ENCODE measurements at regions of chr16 and their contacts with region 1.

Region 1: GRCh38 chr16:89764711-89765201 is 43.4 kb downstream of the ZNF276 start:
- DNase-seq: peak; percentile 26 to 67 (median 35)
- H3K4me3 ChIP-seq: peak overlapping the region; percentile 49 to 56
- H3K4me3 Mint-ChIP-seq: peak overlapping the region; percentile 87 to 95 (median 92)
- H3K27ac ChIP-seq: peak overlapping the region; percentile 75
- H3K27ac Mint-ChIP-seq: peak overlapping the region; percentile 81 to 98 (median 96)
- H3K4me1 ChIP-seq: peaks cover 50% of the 10 kb centered on the region
- H3K4me1 Mint-ChIP-seq: peaks cover 32 to 53% (median 45%) of the 10 kb centered on the region in 4 donors
- H3K27me3 ChIP-seq: no peaks in the 10 kb centered on the region
- H3K27me3 Mint-ChIP-seq: no peaks in the 10 kb centered on the region

Region 2: DNA sequence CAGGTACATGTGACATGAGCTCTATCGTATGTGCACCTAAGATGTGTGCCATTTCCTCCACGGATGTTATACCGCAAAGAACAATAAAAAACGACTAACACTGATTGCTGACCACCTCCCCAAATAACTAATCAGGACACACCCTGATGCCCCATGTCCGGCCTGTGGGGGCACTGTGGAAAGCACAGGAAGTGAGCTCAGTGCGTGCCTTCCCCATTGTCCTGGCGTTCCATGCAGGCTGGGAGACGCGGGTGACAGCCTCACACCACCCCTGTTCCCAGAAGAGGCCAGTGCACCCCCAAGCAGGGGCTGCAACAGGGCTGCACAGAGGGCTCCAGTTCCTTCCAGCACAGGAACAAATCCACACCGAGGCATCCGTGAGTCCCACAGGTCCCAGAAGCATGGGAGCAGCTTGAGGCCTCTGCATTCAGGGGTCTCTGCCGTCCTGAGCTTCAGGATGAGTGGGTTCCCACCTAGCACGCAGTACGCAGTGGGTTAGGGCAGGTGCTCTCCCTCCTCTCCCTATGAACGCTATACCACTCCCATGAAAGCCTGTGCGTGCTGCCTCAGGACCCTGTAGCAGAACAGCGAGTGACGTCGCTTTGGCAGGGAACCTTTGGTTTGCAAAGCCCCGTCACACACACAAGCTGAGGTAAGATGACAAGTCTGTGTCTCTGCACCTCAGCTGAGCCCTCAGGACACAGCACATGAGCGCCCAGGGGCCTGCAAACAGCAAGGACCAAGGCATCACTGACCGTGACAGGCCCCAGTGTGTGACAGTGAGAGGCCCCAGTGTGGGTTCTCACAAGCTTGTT is 429.6 kb before region 1 on chr16:
- CTCF ChIA-PET with region 1: no interaction called
- POLR2A ChIA-PET with region 1: no interaction called
- intact Hi-C with region 1: no loop called
- DNase-seq: peak in 1 of 5 donors; percentile 41
- H3K4me3 ChIP-seq: no peak overlapping the region
- H3K4me3 Mint-ChIP-seq: peak overlapping the region in 2 of 8 donors; percentile 20 to 46
- H3K27ac ChIP-seq: peak overlapping the region; percentile 1
- H3K27ac Mint-ChIP-seq: peak overlapping the region; percentile 36 to 88 (median 55)
- H3K4me1 ChIP-seq: peaks cover 85% of the 10 kb centered on the region
- H3K4me1 Mint-ChIP-seq: peaks cover 43 to 84% (median 68%) of the 10 kb centered on the region in 4 donors
- H3K27me3 ChIP-seq: no peaks in the 10 kb centered on the region
- H3K27me3 Mint-ChIP-seq: no peaks in the 10 kb centered on the region

Region 3: DNA sequence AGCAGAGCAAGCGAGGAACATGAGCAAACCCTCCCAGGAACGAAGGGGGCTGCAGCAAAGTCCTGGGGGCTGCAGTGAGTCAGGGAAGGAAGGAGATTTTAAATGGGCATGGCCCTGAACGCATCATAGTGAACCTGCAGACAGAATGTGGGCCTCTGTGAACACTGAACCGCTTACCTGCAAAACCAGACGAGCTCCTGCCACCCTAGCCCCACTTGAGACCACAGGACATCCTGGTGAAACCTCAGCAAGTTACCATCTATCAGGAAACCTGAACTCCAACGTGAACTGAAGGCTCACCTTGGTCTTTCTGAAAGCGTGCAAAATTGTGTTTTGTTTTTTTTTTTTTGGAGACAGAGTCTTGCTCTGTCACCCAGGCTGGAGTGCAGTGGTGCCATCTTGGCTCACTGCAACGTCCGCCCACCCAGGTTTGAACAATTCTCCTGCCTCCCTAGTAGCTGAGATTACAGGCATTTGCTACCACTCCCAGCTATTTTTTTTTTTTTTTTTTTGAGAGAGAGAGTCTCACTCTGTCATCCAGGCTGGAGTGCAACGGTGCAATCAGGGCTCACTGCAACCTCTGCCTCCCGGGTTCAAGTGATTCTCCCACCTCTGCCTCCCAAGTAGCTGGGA is 20.9 kb after region 1 on chr16:
- CTCF ChIA-PET with region 1: interaction called, 4 read pairs
- POLR2A ChIA-PET with region 1: interaction called, 17 read pairs
- intact Hi-C with region 1: no loop called
- DNase-seq: peak; percentile 68 to 83 (median 71)
- H3K4me3 ChIP-seq: no peak overlapping the region
- H3K4me3 Mint-ChIP-seq: peak overlapping the region in 7 of 8 donors; percentile 13 to 82 (median 67)
- H3K27ac ChIP-seq: no peak overlapping the region
- H3K27ac Mint-ChIP-seq: peak overlapping the region; percentile 43 to 95 (median 77)
- H3K4me1 ChIP-seq: peaks cover 33% of the 10 kb centered on the region
- H3K4me1 Mint-ChIP-seq: peaks cover 24 to 42% (median 29%) of the 10 kb centered on the region in 4 donors
- H3K27me3 ChIP-seq: no peaks in the 10 kb centered on the region
- H3K27me3 Mint-ChIP-seq: no peaks in the 10 kb centered on the region

Region 4: DNA sequence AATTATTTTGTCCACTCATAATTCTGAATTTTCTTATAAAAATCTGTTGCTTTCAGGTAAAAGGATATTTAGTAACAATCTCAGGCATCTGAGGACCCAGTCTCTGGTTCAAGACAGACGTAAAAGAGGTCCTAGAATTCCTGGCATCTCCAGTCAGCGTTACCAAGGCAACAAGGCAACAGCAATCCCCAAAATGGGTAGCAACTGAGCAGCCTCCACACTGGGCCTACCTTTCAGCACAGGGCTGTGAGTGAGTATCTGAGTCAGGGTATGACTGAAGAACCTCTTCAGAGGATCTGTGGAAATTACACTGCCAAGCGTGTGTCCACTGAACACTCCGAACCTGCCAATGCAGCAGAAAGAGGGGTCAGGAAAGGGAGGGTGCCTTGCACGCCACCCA is 30.9 kb after region 1 on chr16:
- CTCF ChIA-PET with region 1: interaction called, 22 read pairs
- POLR2A ChIA-PET with region 1: interaction called, 8 read pairs
- intact Hi-C with region 1: no loop called
- DNase-seq: no peak
- H3K4me3 ChIP-seq: no peak overlapping the region
- H3K4me3 Mint-ChIP-seq: no peak overlapping the region
- H3K27ac ChIP-seq: no peak overlapping the region
- H3K27ac Mint-ChIP-seq: no peak overlapping the region
- H3K4me1 ChIP-seq: no peaks in the 10 kb centered on the region
- H3K4me1 Mint-ChIP-seq: peaks cover 6 to 14% (median 8%) of the 10 kb centered on the region in 4 donors
- H3K27me3 ChIP-seq: no peaks in the 10 kb centered on the region
- H3K27me3 Mint-ChIP-seq: no peaks in the 10 kb centered on the region

Region 5: DNA sequence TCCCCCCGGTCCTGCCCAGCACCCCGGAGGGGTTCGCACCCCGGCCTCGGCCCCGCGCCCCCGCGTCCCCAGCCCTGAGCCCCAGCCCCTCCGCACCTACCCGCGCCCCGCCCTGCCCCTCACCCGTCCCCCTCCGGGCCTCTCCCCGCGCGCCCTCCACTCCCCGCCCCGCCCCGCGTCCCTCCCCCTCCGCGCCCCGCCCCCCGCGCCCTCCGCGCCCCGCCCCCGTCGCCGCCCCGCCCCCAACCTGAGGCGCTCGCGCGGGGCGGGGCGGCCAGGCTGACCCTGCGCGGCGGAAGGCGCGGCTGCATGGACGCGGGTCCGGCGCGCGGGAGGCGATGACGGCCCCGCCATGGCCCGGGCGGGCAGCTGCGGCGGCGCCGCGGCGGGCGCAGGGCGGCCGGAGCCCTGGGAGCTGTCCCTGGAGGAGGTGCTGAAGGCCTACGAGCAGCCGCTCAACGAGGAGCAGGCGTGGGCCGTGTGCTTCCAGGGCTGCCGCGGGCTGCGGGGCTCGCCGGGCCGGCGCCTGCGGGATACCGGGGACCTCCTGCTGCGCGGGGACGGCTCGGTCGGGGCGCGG is 63.5 kb after region 1 on chr16 and contains the start of gene SPIRE2:
- CTCF ChIA-PET with region 1: no interaction called
- POLR2A ChIA-PET with region 1: no interaction called
- intact Hi-C with region 1: no loop called
- DNase-seq: peak; percentile 71 to 77 (median 75)
- H3K4me3 ChIP-seq: no peak within 1 kb of the TSS
- H3K4me3 Mint-ChIP-seq: peak within 1 kb of the TSS; percentile 36 to 75 (median 60)
- H3K27ac ChIP-seq: no peak within 1 kb of the TSS
- H3K27ac Mint-ChIP-seq: peak within 1 kb of the TSS in 3 of 7 donors; percentile 30 to 79 (median 52)
- H3K4me1 ChIP-seq: peaks cover 8% of the 10 kb centered on the region
- H3K4me1 Mint-ChIP-seq: peaks cover 2 to 13% (median 6%) of the 10 kb centered on the region in 4 donors
- H3K27me3 ChIP-seq: peaks cover 15% of the 10 kb centered on the region
- H3K27me3 Mint-ChIP-seq: peaks cover 14 to 17% of the 10 kb centered on the region in 2 donors
- total RNA-seq, gene SPIRE2: 3.0 to 3.3 TPM